ENCODE measurements at regions of chr1 and their contacts with region 1.

Region 1: GRCh38 chr1:45359882-45360513 is 19.8 kb upstream of the MUTYH start:
- DNase-seq: peak; percentile 84
- H3K4me3 Mint-ChIP-seq: no peak overlapping the region
- H3K27ac Mint-ChIP-seq: peak overlapping the region; percentile 37
- H3K4me1 Mint-ChIP-seq: peaks cover 10% of the 10 kb centered on the region
- H3K27me3 Mint-ChIP-seq: no peaks in the 10 kb centered on the region

Region 2: DNA sequence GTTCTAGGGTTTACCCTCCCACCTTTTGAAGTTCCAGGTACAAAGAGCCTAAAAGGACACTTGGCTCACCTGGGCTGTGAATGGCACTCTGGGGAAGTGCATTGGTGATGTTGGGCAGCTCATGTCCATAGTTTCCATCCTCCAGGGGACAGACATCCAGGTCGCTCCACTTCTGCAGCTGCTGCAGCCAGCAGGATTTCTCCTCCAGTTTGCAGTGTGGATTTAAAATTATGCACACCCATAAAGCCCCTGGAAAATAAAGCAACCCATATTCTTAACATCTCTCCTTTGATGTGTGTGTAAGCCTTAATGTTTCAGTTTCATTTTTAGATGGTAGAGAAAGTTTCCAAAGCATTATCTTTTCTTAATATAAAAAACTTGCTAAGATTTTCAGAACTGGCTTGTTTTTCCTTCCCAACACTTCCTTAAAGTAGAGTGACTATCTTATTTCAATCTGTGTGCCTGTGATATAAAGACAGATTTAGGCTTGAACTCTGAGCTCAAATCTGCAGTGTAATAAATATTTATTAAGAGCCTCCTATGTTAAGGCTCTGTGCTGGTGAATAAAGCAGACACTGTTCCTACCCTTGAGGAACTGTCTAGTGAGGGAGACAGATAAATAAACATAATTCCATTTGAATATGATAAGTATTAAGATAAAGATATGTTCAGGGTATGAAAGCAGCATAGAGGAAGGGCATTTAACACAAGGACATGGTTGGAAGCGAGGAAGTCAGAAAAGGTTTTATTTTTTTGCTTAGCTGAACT is 308.8 kb before region 1 on chr1:
- CTCF ChIA-PET with region 1: no interaction called
- intact Hi-C with region 1: no loop called
- DNase-seq: peak; percentile 8
- H3K4me3 Mint-ChIP-seq: no peak overlapping the region
- H3K27ac Mint-ChIP-seq: peak overlapping the region; percentile 31
- H3K4me1 Mint-ChIP-seq: peaks cover 14% of the 10 kb centered on the region
- H3K27me3 Mint-ChIP-seq: no peaks in the 10 kb centered on the region

Region 3: GRCh38 chr1:45339789-45340570 is 20.0 kb before region 1 on chr1 and contains the starts of genes MUTYH and TOE1:
- CTCF ChIA-PET with region 1: interaction called, 26 read pairs
- intact Hi-C with region 1: no loop called
- DNase-seq: peak; percentile 95
- H3K4me3 Mint-ChIP-seq: peak within 1 kb of the TSS; percentile 100
- H3K27ac Mint-ChIP-seq: peak within 1 kb of the TSS; percentile 100
- H3K4me1 Mint-ChIP-seq: peaks cover 35% of the 10 kb centered on the region
- H3K27me3 Mint-ChIP-seq: no peaks in the 10 kb centered on the region
- total RNA-seq, gene MUTYH: 42.0 to 45.0 TPM
- total RNA-seq, gene TOE1: 23.0 to 23.8 TPM

Region 4: GRCh38 chr1:45348716-45349677 is 11.0 kb before region 1 on chr1:
- CTCF ChIA-PET with region 1: interaction called, 10 read pairs
- intact Hi-C with region 1: no loop called
- DNase-seq: no peak
- H3K4me3 Mint-ChIP-seq: no peak overlapping the region
- H3K27ac Mint-ChIP-seq: no peak overlapping the region
- H3K4me1 Mint-ChIP-seq: peaks cover 4% of the 10 kb centered on the region
- H3K27me3 Mint-ChIP-seq: no peaks in the 10 kb centered on the region

Region 5: DNA sequence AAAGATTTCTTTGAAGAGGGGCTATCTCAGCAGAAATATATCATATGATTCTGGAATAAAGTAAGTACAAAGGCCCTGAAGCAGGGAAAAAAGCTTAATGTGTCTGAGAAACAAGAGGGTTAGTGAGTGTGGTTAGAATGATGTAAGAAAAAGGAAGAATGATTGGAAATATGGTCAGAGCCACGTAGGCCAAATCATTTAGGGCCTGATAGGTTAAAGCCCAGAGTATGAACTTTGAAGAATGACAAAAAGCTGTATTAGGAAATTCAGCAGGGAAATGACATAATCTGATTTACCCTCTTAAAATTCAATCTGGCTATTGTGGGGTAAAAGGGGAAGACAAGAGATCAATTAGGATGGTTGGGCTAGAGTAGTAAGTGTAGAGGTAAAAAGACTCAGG is 49.3 kb after region 1 on chr1:
- CTCF ChIA-PET with region 1: no interaction called
- intact Hi-C with region 1: loop called (anchors 5 kb)
- DNase-seq: no peak
- H3K4me3 Mint-ChIP-seq: no peak overlapping the region
- H3K27ac Mint-ChIP-seq: peak overlapping the region; percentile 4
- H3K4me1 Mint-ChIP-seq: peaks cover 7% of the 10 kb centered on the region
- H3K27me3 Mint-ChIP-seq: no peaks in the 10 kb centered on the region

Region 6: DNA sequence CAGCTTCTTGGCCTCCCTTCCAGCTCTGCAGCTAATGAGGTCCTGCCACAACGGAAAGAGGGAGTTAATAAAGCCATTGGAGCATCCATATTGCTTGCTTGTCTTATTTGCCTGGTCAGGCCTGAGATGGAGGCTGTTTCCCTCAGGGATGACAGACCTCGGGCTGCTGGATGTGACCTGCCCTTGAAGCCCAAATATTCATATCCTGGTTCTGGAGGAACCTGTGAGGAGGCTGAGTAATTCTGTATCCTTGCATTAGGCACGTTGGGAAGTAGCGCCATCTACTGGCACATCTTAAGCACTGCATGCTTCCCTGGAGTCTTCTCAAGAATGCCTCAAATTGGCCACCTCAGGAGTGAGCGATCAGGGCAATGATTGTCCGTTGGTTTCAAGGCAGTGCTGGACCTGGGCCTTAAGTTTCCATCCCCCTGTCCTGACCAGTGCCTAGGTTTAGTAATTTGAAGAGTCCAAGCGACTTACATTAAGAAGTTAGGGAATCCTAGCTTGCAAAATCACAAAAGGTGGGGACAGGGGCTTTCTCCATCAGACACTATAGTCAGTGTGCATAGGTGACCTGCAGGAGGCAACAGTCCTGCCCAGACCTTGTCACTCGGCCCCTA is 210.1 kb after region 1 on chr1:
- CTCF ChIA-PET with region 1: interaction called, 18 read pairs
- intact Hi-C with region 1: loop called (anchors 1 kb)
- DNase-seq: peak; percentile 87
- H3K4me3 Mint-ChIP-seq: no peak overlapping the region
- H3K27ac Mint-ChIP-seq: peak overlapping the region; percentile 34
- H3K4me1 Mint-ChIP-seq: peaks cover 2% of the 10 kb centered on the region
- H3K27me3 Mint-ChIP-seq: no peaks in the 10 kb centered on the region